ENCODE measurements at regions of chr2 and their contacts with region 1.

Region 1: GRCh38 chr2:133862400-133862977 is 294.2 kb upstream of the NCKAP5 start:
- DNase-seq: no peak
- ATAC-seq: no peak
- H3K4me3 ChIP-seq: no peak overlapping the region
- H3K4me3 Mint-ChIP-seq: no peak overlapping the region
- H3K27ac ChIP-seq: no peak overlapping the region
- H3K27ac Mint-ChIP-seq: no peak overlapping the region
- H3K4me1 ChIP-seq: no peaks in the 10 kb centered on the region
- H3K4me1 Mint-ChIP-seq: no peaks in the 10 kb centered on the region
- H3K27me3 ChIP-seq: peaks cover 2 to 8% of the 10 kb centered on the region in 2 experiments
- H3K27me3 Mint-ChIP-seq: peaks cover 21 to 22% of the 10 kb centered on the region in 2 donors

Region 2: DNA sequence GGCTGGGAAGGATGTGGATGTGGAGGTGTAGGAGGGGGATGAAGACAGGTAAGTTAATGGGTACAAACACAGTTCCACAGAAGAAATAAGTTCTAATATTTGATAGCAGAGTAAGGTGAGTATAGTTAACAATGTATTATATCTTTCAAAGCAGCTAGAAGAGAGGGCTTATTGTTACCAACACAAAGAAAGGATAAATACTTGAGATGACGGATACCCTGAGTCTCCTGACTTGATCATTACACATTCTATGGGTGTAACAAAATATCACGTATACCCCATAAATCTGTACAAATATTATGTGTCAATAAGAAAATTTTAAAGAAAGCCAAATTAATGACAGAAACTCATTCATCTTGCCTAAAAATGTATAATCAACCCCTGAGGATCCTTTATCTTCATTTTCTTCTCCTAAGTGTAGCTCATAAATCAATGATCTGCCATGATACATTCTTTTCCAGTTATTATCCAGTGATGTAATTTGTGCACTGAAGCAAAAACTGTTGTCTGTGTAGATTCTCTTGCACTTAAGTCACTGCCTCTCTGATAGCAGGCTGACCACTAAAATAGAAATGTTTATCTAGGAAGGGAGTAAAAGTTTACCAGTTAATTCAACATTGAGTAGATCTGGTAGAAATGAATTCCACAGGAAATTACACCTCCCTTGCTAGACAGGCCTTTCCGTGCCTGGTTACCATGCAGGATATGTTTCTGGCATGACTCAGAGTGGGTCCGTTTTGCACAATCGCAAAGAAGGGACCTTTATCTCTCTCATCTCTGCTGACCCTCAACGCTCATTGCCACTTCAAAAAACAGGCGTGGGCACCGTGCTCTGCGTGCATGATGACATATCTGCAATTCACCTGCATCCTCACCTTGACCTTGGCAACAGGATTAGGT is 44.6 kb before region 1 on chr2:
- CTCF ChIA-PET with region 1: no interaction called
- POLR2A ChIA-PET with region 1: no interaction called
- DNase-seq: no peak
- ATAC-seq: no peak
- H3K4me3 ChIP-seq: no peak overlapping the region
- H3K4me3 Mint-ChIP-seq: no peak overlapping the region
- H3K27ac ChIP-seq: no peak overlapping the region
- H3K27ac Mint-ChIP-seq: no peak overlapping the region
- H3K4me1 ChIP-seq: no peaks in the 10 kb centered on the region
- H3K4me1 Mint-ChIP-seq: no peaks in the 10 kb centered on the region
- H3K27me3 ChIP-seq: peaks cover 0 to 14% of the 10 kb centered on the region in 2 experiments
- H3K27me3 Mint-ChIP-seq: peaks cover 6 to 14% of the 10 kb centered on the region in 2 donors

Region 3: DNA sequence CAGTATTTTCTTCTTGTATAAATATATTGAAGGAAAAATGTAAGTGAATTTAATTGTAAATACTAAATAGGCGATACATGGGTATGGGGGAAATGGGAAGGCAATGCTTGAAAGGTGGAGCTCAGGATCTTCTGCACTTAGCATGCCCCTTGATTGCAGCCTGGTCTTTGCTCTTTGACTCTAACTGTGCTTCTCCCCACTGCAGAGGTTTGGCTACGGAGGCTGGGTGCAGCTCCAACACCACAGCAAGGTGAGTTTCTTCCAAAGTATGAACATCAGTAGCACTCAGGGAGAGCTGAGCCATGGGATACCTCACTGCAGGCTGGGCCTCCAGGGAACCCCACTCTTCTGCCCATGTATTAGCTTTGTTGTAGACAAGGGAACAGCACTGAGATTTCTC is 982.5 kb after region 1 on chr2:
- CTCF ChIA-PET with region 1: interaction called in 1 of 2 experiments, 10 read pairs
- POLR2A ChIA-PET with region 1: no interaction called
- DNase-seq: no peak
- ATAC-seq: no peak
- H3K4me3 ChIP-seq: no peak overlapping the region
- H3K4me3 Mint-ChIP-seq: no peak overlapping the region
- H3K27ac ChIP-seq: no peak overlapping the region
- H3K27ac Mint-ChIP-seq: no peak overlapping the region
- H3K4me1 ChIP-seq: no peaks in the 10 kb centered on the region
- H3K4me1 Mint-ChIP-seq: no peaks in the 10 kb centered on the region
- H3K27me3 ChIP-seq: peaks cover 0 to 5% of the 10 kb centered on the region in 2 experiments
- H3K27me3 Mint-ChIP-seq: peaks cover 3 to 7% of the 10 kb centered on the region in 2 donors